Posterior vena cava (tissue), 2 donors: ENCODE measurements at regions of chr5 and their contacts with region 1.

Region 1: GRCh38 chr5:8005416-8005815 is 136.5 kb downstream of the MTRR start:
- DNase-seq: no peak

Region 2: DNA sequence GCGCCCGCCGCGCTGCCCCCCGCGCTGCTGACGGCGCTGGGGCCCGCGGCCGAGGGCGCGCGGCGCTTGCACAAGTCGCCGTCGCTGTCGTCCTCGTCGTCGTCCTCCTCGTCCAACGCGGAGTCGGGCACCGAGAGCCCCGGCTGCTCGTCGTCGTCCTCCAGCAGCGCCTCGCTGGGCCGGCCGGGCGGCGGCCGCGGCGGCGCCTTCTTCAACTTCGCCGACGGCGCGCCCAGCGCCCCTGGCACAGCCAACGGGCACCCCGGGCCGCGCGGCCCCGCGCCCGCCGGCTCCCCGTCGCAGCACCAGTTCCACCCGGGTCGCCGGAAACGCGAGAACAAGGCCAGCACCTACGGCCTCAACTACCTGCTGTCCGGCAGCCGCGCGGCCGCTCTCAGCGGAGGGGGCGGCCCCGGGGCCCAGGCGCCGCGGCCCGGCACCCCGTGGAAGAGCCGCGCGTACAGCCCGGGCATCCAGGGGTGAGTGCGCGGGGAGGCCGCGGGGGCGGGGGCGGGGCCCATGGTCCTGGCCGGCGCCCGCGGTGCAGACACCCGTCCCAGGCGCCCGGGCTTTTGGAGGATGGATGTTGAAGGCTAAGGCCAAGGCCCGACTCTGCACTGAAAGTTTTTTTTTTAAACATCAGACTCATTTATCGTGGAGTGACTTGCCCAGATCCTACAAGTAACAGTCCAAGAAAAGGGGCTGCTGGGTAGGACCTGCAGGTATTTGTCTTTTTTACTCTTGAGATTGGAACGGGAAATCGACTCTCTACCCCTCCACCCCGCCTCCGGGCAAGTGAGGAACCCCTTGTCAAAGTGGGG is 1291.0 kb before region 1 on chr5:
- intact Hi-C with region 1: loop called in 1 of 2 experiments (anchors 5 kb)
- DNase-seq: peak; percentile 82